Aorta (tissue), 5 donors: ENCODE measurements at regions of chr12 and their contacts with region 1.

Region 1: DNA sequence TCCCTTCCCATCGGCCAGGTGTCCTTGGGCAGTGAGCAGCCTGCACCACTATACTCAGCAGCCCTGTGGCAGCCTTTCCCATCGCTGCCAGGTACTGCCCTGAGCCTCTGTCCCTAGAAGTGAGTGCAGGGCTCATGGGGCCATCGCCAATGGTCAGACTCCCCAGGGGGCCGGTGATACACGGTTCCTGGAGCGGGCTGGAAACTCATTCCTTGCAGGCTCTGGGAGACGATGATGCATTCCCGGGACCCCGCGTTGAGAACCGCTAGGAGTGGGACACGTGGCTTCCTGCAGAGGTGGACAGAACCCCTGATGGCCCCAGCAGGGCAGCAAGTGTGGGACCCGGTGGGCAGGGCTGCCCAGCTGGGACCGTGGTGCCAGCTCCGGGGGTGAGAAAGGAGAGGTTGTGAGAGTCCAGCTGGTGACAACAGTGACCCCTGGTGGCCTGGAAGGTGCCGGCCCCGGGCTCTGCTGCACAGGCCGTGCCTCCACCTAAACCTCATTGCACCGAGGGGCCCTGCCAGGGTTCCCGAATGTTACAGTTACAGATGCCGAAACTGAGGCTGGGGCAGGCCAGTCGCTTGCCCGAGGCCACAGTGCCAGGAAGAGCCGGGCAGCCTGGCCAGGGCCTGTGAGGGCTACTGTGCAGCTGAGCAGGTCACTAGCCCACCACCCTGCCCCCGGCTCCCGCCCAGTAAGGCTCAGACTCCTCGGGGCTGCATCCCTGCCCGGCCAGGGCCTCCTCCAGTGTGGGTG is 33.8 kb downstream of the FBRSL1 start:
- DNase-seq: peak; percentile 82 to 90
- ATAC-seq: peak; percentile 57
- H3K4me3 ChIP-seq: no peak overlapping the region
- H3K27ac ChIP-seq: no peak overlapping the region
- H3K4me1 ChIP-seq: no peaks in the 10 kb centered on the region
- H3K27me3 ChIP-seq: no peaks in the 10 kb centered on the region

Region 2: DNA sequence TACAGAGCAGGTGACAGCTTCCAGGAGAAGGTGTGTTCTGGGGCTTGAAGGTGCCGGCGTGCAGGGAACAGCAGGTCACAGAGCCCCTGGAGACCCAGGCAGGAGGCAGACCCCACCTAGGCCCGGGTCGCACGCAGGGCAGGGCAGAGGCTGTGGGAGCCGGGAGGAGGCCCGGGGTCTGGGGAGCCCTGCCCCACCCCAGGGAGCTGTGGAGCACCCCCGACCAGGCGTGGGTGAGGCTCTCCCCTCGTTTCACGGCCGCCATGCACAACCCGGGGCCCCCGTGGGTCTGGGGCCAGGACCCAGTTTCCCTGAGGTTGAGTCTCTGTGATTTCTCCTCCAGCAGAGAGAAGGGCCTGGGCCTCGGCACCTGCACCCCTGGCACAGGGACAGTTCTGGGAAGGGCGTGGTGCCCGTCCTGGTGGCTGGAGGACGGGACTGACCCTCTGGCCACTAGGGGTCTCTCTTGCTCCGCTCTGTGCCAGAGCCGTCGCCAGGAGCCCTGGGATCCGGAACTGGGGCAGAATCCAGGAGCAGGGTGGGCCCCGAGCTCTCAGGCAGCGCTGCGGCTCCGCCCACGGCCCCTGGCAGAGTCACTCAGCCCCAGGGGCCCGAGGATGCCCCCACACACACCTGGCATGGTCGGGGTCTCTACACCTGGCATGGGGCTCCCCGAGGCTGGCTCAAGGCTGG is 109.0 kb before region 1 on chr12:
- intact Hi-C with region 1: loop called (anchors 5 kb)
- DNase-seq: peak; percentile 84 to 90
- ATAC-seq: peak; percentile 87
- H3K4me3 ChIP-seq: no peak overlapping the region
- H3K27ac ChIP-seq: no peak overlapping the region
- H3K4me1 ChIP-seq: no peaks in the 10 kb centered on the region
- H3K27me3 ChIP-seq: no peaks in the 10 kb centered on the region